Mucosa of descending colon (tissue), 3 donors: ENCODE measurements at regions of chr1 and their contacts with region 1.

Region 1: DNA sequence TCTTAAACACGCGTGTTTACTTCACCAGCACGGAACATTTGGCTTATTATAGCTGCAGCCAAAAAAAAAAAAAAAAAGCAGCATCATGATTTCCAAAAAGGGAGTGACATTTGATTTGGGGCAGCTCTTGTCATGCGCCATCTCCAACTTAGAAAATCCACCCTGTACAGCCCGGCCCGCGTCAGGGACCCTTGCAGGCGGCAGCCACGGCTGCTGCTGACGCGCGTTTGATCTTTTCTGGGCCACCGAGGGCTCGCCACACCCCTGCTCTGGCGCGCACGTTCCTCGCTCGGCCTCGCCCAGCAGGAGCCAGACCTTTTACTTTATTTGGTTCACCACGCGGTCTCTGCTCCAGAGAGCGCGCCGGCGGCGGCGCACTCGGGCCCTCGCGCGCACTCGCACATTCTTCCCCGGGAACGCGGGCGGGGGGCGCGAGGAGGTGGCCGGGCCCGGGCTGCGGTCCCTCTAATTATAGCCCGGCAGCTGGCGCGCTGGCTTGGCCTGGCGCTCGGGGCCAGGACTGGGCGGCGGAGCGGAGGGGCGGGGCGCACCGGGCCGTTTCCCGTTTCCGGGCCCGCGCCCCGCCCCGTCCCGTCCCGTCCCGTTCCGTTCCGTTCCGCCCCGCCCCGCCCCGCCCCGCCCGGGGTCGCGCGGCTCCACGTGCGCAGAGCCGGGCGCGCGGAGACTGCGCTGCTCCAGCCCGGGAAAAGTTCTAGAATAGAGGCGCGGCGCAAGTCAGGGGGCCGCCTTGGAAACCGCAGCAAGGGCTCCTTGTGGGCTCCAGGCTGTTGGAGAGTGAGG is 10.2 kb downstream of the IRF2BP2 start:
- DNase-seq: peak; percentile 88 to 94 (median 93)
- ATAC-seq: peak; percentile 88
- H3K4me3 ChIP-seq: peak overlapping the region; percentile 15
- H3K4me1 ChIP-seq: peaks cover 49% of the 10 kb centered on the region
- CTCF ChIP-seq: no peak

Region 2: DNA sequence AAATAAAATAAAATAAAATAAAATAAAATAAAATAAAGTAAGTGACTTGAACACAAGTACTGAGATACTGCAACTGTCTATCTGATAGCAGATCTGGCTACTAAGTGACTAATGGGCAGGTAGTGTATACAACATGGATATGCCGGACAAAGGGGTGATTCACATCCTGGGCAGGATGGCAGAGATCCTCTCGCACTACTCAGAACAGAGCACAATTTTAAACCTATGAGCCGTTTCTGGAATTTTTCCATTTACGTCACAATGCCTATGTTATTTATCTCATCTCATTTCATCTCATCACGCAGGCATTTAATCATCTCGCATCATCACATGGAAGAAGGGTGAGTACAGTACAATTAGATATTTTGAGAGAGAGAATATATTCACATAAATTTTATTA is 459.9 kb before region 1 on chr1:
- intact Hi-C with region 1: no loop called
- DNase-seq: no peak
- ATAC-seq: no peak
- H3K4me3 ChIP-seq: no peak overlapping the region
- H3K4me1 ChIP-seq: no peaks in the 10 kb centered on the region
- CTCF ChIP-seq: no peak

Region 3: DNA sequence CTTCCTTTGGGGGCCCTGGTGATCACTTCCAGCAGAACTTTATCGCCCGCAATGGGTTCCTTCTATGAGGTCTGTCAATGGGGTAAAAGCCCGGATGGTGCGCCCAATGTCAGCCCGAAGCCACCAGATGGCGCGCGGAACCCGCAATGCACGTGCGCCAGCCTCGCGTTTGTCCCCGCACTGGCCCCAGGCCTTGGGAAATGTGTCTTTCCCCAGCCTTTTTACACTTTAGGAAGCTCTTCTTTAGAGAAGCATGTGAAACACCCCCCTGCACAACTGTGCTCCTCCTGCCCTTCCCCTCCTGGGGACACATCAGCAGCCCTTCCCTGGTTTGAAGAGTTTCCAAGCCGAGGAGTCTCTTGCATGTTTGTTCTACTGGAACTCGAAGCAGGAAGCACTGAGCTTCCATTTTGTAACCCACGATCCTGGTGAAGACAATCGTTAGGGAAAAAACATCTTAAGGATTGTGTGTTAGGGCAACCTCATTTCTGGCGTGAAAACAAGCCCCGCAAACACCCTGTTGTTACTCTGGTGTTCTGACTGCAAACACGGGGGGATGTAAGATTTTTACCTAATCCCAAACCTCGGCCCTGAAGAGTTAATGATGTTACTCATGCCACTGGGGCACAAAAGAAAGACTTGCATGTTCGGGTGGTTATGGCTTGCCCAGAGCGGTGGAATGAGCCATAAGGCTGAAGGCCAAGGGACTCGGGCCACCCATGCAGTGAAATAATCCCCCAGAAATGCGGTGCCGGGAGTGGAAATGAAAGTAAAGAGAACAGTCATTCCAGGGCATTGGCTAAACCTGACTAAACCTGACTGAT is 100.5 kb before region 1 on chr1:
- intact Hi-C with region 1: loop called in 1 of 2 experiments (anchors 10 kb)
- DNase-seq: peak; percentile 92 to 96 (median 94)
- ATAC-seq: peak; percentile 99
- H3K4me3 ChIP-seq: no peak overlapping the region
- H3K4me1 ChIP-seq: peaks cover 19% of the 10 kb centered on the region
- CTCF ChIP-seq: peak; percentile 89

Region 4: GRCh38 chr1:235093696-235094592 is 494.1 kb after region 1 on chr1:
- intact Hi-C with region 1: loop called in 1 of 2 experiments (anchors 10 kb)
- DNase-seq: peak; percentile 78 to 92 (median 90)
- ATAC-seq: peak; percentile 91
- H3K4me3 ChIP-seq: no peak overlapping the region
- H3K4me1 ChIP-seq: peaks cover 11% of the 10 kb centered on the region
- CTCF ChIP-seq: peak; percentile 94